Pancreas (tissue), 10 donors: ENCODE measurements at regions of chr2 and their contacts with region 1.

Region 1: GRCh38 chr2:54657664-54658083 is 65.8 kb upstream of the EML6 start:
- DNase-seq: peak in 5 of 6 donors; percentile 50 to 71 (median 61)
- ATAC-seq: peak; percentile 58 to 94 (median 89)
- H3K4me3 ChIP-seq: no peak overlapping the region
- H3K27ac ChIP-seq: no peak overlapping the region
- H3K4me1 ChIP-seq: no peaks in the 10 kb centered on the region
- H3K27me3 ChIP-seq: no peaks in the 10 kb centered on the region
- CTCF ChIP-seq: peak; percentile 16 to 47 (median 34)

Region 2: DNA sequence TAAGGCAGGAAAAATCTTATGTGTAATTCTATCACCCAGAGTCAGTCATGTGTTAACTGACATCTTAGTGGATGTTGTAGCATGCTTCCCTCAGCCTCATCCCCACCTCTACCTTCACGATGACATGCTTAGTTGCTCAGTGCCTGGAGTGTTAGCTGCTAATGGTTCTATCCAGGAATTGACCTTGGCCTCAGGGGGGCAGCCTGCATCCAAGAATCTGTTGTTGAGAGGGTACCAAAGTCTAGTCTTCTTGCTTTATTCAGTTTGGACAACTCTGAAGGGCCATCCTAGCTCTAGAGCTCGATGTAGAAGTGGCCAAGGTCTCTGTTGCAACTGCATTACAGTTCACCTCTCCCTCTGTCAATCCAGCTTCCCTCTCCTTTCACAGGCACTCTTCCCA is 481.1 kb before region 1 on chr2:
- intact Hi-C with region 1: no loop called
- DNase-seq: peak in 1 of 6 donors; percentile 16
- ATAC-seq: peak in 3 of 4 donors; percentile 24 to 35 (median 25)
- H3K4me3 ChIP-seq: no peak overlapping the region
- H3K27ac ChIP-seq: no peak overlapping the region
- H3K4me1 ChIP-seq: no peaks in the 10 kb centered on the region
- H3K27me3 ChIP-seq: no peaks in the 10 kb centered on the region
- CTCF ChIP-seq: no peak

Region 3: GRCh38 chr2:54429811-54430551 is 227.7 kb before region 1 on chr2:
- intact Hi-C with region 1: no loop called
- DNase-seq: no peak
- ATAC-seq: no peak
- H3K4me3 ChIP-seq: no peak overlapping the region
- H3K27ac ChIP-seq: no peak overlapping the region
- H3K4me1 ChIP-seq: peaks cover 1 to 6% (median 5%) of the 10 kb centered on the region in 3 donors
- H3K27me3 ChIP-seq: no peaks in the 10 kb centered on the region
- CTCF ChIP-seq: no peak

Region 4: DNA sequence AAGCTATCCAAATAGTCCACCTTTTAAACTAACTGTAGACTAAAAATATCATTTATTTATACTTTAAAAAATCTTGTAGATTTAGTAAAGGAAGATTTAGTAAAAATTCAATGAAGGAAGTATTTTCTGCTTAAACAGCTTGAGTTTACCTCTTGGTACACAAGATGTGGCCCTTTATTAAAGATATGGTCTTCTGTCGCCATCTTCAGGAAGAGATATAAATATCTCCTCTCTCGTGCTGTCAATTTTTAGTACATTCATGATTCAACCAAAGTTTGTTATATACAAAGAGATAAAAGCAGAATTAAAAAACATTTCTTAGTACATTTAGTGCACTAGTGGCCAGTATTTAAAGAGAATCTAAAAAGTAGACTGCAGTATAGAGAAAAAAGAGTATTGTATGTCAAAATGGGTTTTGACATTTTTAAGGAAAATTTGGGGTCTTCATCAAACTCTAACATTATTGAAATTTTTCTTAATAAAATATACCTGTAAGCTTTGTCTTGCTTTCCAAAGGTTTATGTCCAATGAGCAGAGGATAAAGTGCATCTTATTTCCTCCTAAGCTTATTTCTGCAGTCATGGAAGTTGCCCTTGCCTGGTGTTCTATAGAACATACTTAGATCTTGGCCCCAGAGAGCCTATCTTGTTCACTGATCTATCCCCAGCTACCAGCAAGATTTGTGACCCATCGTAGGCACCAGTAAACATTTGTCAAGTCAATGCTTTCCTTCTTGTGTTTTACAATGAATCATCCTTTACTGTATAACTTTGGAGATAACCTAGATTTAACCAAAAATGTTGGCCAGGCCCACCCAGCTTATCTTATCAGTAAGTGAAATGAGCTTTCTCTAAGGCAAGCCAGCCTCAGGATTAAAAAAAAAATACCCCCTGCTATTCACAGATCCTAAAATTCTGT is 47.3 kb after region 1 on chr2:
- intact Hi-C with region 1: loop called in 1 of 3 experiments (anchors 10 kb)
- DNase-seq: no peak
- ATAC-seq: peak in 2 of 4 donors; percentile 41 to 42
- H3K4me3 ChIP-seq: no peak overlapping the region
- H3K27ac ChIP-seq: no peak overlapping the region
- H3K4me1 ChIP-seq: no peaks in the 10 kb centered on the region
- H3K27me3 ChIP-seq: no peaks in the 10 kb centered on the region
- CTCF ChIP-seq: peak in 2 of 4 donors; percentile 29 to 30